Colonic mucosa (tissue), 4 donors: ENCODE measurements at regions of chr1 and their contacts with region 1.

Region 1: DNA sequence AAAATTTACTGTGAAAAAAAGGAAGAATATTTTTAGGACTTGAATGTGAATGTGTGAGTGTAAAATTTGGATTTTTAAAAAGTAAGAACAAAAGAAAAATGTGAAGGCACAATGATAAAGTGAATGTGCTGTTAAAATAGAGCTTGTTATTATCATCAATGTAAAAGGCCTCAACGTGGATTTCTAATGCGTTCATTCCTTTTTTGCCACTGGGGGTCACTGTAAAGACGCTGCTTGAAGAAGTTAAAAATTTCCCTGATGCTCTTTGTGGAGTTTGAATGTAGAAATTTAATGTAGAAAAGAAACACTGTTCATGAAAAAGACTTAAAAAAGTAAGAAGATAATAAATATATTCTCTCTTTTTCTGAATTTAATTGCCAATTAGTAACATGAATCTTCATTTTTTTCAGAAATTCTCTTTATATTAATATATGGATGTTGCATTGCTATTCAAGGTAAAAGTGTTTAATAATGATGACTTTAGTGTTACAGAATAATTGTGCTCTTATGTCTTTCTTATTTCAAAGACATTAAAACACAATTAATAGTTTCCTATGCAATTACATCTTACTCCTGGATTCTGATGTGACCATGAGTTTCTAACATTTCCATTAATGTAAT is 161.5 kb downstream of the DNM3 start:
- DNase-seq: peak; percentile 33
- H3K4me3 ChIP-seq: no peak overlapping the region
- H3K27ac ChIP-seq: no peak overlapping the region
- H3K4me1 ChIP-seq: no peaks in the 10 kb centered on the region
- H3K27me3 ChIP-seq: no peaks in the 10 kb centered on the region
- CTCF ChIP-seq: peak; percentile 58

Region 2: DNA sequence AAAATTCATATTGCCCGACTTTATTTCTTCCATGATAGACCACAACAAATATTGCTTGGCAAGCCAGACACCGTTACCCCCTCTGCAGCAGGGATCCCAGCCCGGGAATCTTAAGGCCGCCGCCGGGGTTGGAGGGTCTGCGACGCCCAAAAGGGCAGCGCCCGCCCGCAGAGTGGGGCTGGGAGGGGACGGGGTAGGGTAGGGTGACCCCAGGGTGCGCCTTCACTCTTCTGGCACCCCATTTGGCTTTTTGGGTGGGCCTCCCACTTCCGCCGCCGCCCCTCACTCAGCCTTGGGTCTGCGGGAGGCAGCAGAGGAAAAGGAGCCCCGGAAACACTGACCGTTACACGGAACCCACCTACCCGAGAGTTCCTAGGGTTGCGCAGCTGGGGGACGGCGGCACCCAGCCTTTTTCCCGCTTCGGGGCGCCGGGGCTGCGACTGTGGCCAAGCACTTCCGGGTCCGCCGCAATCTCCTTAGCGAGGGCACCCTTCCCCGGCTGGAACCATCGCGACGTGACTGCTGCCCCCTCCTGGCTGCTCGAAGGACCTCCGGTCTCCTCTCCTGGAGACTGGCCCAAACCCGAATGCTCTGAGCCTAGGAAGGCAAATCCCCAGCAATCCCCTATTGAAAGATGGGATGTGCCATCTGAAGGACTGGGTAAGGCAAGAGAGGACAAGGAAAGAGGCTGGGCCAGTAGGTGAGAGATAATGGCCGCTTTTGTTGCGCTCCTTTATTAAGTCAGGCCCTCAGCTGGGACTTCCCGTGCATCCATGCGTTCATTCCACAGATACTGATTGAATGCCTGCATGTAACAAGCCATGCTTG is 441.0 kb after region 1 on chr1 and contains the start of gene PIGC:
- intact Hi-C with region 1: loop called (anchors 10 kb)
- DNase-seq: peak; percentile 94
- H3K4me3 ChIP-seq: peak within 1 kb of the TSS; percentile 74
- H3K27ac ChIP-seq: peak within 1 kb of the TSS; percentile 63
- H3K4me1 ChIP-seq: peaks cover 4% of the 10 kb centered on the region
- H3K27me3 ChIP-seq: no peaks in the 10 kb centered on the region
- CTCF ChIP-seq: peak; percentile 78
- total RNA-seq, gene PIGC: 20.5 to 24.1 TPM